AG04449 (cell line): ENCODE measurements at regions of chr15 and their contacts with region 1.

Region 1: DNA sequence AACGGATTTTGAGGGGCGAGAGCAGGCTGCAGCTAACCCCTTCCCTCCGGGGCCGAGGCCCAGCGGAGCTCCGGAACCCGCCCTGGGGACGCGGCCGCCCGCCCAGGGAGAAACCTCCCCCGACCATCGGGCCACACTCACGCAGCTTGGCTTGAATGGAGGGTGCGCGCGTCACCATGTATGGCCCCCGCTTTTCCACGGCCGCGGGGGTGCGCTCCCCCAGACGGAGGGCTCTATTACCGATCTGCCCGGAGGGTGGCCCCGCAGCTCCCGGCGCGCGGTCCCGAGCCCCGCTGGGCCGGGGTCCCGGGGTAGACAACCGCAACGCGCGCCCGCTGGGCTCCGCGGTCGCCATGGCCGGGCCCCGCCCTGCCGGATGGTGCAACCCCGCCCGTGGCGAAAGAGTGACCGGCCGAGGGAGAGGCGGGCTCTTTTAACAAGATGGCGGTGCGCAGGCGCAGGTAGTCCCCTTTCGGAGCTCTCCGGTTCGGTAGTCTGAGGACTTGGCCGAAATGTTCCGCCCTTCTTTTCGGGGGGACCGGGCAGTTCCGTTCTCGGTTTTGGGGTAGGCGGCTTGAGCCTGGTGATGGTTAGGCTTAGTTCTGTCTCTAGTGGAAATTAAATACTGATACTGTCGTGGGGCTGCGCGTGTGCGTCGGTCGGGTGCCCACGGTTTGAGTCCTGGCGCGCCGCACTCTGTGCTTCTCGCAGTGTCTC is at the start of gene FAM219B:
- DNase-seq: no peak
- H3K4me3 ChIP-seq: peak within 1 kb of the TSS; percentile 73
- CTCF ChIP-seq: no peak

Region 2: GRCh38 chr15:74781431-74782258 is 125.0 kb before region 1 on chr15 and contains the start of gene CSK:
- CTCF ChIA-PET with region 1: interaction called, 21 read pairs
- POLR2A ChIA-PET with region 1: interaction called, 6 read pairs
- DNase-seq: no peak
- H3K4me3 ChIP-seq: peak within 1 kb of the TSS; percentile 78
- CTCF ChIP-seq: peak; percentile 57

Region 3: GRCh38 chr15:74842581-74843444 is 63.8 kb before region 1 on chr15 and contains the start of gene ULK3:
- CTCF ChIA-PET with region 1: interaction called, 38 read pairs
- POLR2A ChIA-PET with region 1: no interaction called
- DNase-seq: no peak
- H3K4me3 ChIP-seq: peak within 1 kb of the TSS; percentile 87
- CTCF ChIP-seq: peak; percentile 71

Region 4: GRCh38 chr15:74873036-74873755 is 33.4 kb before region 1 on chr15 and contains the start of gene SCAMP2:
- CTCF ChIA-PET with region 1: interaction called, 21 read pairs
- POLR2A ChIA-PET with region 1: interaction called, 3 read pairs
- DNase-seq: peak; percentile 63
- H3K4me3 ChIP-seq: peak within 1 kb of the TSS; percentile 93
- CTCF ChIP-seq: no peak

Region 5: GRCh38 chr15:74884428-74885223 is 22.0 kb before region 1 on chr15:
- CTCF ChIA-PET with region 1: interaction called, 134 read pairs
- POLR2A ChIA-PET with region 1: interaction called, 10 read pairs
- DNase-seq: no peak
- H3K4me3 ChIP-seq: no peak overlapping the region
- CTCF ChIP-seq: no peak

Region 6: DNA sequence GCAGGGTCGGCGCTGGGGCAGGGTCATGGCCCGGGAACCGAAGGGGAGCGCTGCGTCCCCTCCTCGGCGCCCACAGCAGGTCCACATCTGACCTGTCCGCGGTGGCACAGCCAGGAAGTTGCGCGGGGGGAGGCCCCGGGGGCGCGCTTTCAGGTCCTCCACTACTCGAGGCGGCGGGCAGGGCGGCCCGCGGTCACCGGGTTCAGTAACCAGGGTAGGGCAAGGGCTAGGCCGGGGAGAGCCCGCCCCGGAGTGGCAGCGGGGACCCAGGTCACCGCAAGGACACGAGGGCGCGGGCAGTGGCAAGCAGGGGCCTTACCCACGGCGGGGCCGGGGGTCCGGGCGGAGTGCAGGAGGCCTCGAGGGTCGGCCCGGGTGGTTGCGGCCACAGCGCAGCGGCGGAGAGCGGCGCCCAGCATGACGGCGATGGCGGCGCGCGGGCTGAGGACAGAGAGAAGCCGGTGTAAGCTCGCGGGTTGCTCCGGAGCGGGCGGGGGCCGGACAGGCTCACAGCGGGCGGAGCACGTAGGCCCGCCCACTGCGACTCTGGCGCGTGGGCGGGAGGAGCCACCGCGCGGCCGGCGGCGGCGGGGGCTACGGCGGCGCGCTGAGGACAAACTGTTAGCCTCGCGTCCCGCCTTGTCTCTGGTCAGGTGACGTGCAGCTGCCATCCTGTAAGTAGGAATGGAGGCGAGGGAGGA is 31.1 kb after region 1 on chr15 and contains the start of gene COX5A:
- CTCF ChIA-PET with region 1: interaction called, 11 read pairs
- POLR2A ChIA-PET with region 1: interaction called, 6 read pairs
- DNase-seq: peak; percentile 71
- H3K4me3 ChIP-seq: peak within 1 kb of the TSS; percentile 81
- CTCF ChIP-seq: no peak